Posterior vena cava (tissue), 2 donors: ENCODE measurements at regions of chrX and their contacts with region 1.

Region 1: DNA sequence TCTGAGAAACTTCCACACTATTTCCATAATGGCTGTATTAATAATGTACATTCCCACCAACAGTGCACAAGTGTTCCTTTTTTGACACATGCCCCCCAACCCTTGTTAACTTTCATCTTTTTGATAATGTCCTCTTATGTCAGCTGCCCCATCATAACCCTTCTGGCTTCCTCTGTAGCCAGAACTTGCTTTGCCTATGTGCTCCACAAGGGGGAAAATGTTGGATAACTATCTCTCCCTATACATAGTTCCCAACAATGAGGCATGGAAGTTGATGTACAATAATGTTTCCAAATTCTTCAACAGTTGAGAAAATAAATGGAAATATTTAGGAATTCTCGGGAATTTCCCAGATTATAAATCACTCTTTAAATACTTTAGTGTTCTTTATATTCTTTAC is 142.9 kb downstream of the ASB9 start:
- DNase-seq: no peak

Region 2: DNA sequence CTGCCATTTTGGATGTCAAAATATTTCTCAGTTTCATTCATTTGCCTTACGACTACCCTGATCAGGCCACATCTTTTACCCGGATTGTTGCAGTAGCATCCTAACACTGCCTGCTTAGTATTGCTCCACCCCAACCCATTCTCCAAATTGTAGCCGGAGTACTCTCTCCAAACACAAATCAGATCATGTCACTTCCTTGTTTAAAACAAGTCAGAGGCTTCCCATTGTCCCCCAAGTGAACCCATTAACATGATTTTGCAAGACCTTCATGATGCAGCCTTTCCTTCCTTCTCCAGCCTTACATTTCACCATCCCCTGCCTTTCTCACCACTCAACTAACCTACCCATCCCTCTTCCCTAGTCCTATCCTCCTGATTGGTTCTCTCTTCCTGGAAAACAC is 307.2 kb before region 1 on chrX:
- intact Hi-C with region 1: loop called in 1 of 2 experiments (anchors 5 kb)
- DNase-seq: no peak

Region 3: DNA sequence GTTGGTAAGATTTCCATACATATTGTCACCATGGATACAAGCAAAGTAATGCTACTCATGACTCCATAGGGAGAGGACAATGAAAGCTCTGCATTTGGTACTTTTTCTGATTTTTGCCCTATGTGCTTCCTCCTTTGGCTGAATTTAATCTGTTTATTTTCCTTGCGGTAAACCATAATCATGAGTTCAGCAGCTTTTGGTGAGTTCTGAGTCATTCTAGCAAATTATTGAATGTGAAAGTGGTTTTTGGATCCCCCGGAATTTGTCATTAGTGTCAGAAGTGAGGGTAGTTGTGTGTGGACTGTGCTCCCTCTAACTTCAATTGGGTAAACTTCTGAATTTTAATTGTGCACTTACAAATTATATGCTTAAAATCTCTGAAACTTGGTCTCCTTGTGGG is 83.5 kb before region 1 on chrX:
- intact Hi-C with region 1: no loop called
- DNase-seq: no peak